WTC11 (cell line): ENCODE measurements at regions of chr4 and their contacts with region 1.

Region 1: GRCh38 chr4:81069706-81070331 is 39.3 kb downstream of the BMP3 start:
- DNase-seq: peak; percentile 74
- ATAC-seq: peak; percentile 99
- H3K4me3 Mint-ChIP-seq: no peak overlapping the region
- H3K27ac Mint-ChIP-seq: no peak overlapping the region
- H3K4me1 Mint-ChIP-seq: no peaks in the 10 kb centered on the region; the same call in 1 of the 2 replicates
- H3K27me3 Mint-ChIP-seq: no peaks in the 10 kb centered on the region
- CTCF ChIP-seq: peak; percentile 83

Region 2: GRCh38 chr4:81116566-81116965 is 46.7 kb after region 1 on chr4:
- CTCF ChIA-PET with region 1: no interaction called
- POLR2A ChIA-PET with region 1: no interaction called
- DNase-seq: no peak
- ATAC-seq: no peak
- H3K4me3 Mint-ChIP-seq: no peak overlapping the region
- H3K27ac Mint-ChIP-seq: no peak overlapping the region
- H3K4me1 Mint-ChIP-seq: peaks cover 7% of the 10 kb centered on the region
- H3K27me3 Mint-ChIP-seq: no peaks in the 10 kb centered on the region
- CTCF ChIP-seq: no peak

Region 3: DNA sequence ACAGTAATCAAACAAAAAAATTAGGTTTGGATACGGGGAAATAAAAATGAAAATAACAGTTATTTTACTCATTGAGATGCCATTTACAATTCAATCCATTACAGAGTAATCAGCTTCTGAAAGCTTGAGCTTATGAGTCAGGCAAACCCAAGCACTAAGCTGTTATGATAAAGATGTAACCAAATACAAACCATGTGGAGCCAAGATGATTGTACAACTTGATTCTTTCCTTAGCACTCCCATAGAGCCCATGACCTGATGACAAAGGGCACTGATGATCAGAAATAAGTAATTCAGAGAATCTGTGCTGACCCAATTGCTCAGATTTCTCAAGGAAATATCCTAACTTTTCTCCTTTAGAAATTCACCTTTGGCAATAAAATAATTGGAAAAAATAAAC is 185.7 kb after region 1 on chr4:
- CTCF ChIA-PET with region 1: interaction called, 31 read pairs
- POLR2A ChIA-PET with region 1: no interaction called
- DNase-seq: no peak
- ATAC-seq: no peak
- H3K4me3 Mint-ChIP-seq: no peak overlapping the region
- H3K27ac Mint-ChIP-seq: no peak overlapping the region
- H3K4me1 Mint-ChIP-seq: peaks cover under 1% of the 10 kb centered on the region; the same call in 1 of the 2 replicates
- H3K27me3 Mint-ChIP-seq: no peaks in the 10 kb centered on the region; the same call in 1 of the 2 replicates
- CTCF ChIP-seq: no peak

Region 4: DNA sequence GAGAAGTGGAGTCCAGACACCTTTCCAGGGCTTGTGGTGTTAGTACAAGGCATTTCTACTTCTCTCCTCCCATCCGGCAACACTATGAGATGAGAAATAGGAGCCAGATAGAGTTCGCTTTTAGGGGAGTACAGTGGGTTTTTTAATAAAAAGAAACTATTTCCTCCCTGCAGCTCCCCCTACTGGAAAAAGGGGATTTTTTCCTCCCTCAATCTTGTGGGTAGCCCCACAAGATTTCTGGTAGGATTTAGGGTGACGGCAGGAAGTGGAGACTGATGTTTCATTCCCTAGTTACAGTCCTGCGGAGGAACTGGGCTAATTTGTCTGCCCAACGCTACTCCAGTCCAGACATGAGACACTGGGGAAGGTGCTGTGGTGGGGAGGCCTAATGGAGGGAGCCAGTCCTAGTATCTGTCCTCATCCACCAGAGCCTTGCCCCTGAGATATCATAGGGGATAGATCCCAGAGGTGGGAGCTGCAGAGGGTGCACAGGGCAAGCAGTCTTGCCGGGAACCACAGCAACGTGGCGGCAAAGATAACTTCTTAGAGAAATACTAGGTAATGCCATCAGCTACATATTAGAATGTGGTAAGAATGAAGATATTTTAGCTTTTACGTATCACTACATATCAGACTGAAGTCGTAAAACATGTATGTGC is 190.8 kb after region 1 on chr4:
- CTCF ChIA-PET with region 1: interaction called, 31 read pairs
- POLR2A ChIA-PET with region 1: no interaction called
- DNase-seq: peak; percentile 14
- ATAC-seq: peak; percentile 93
- H3K4me3 Mint-ChIP-seq: no peak overlapping the region
- H3K27ac Mint-ChIP-seq: no peak overlapping the region
- H3K4me1 Mint-ChIP-seq: peaks cover 2% of the 10 kb centered on the region
- H3K27me3 Mint-ChIP-seq: no peaks in the 10 kb centered on the region; the same call in 1 of the 2 replicates
- CTCF ChIP-seq: peak; percentile 40; the same call in 1 of the 2 replicates

Region 5: DNA sequence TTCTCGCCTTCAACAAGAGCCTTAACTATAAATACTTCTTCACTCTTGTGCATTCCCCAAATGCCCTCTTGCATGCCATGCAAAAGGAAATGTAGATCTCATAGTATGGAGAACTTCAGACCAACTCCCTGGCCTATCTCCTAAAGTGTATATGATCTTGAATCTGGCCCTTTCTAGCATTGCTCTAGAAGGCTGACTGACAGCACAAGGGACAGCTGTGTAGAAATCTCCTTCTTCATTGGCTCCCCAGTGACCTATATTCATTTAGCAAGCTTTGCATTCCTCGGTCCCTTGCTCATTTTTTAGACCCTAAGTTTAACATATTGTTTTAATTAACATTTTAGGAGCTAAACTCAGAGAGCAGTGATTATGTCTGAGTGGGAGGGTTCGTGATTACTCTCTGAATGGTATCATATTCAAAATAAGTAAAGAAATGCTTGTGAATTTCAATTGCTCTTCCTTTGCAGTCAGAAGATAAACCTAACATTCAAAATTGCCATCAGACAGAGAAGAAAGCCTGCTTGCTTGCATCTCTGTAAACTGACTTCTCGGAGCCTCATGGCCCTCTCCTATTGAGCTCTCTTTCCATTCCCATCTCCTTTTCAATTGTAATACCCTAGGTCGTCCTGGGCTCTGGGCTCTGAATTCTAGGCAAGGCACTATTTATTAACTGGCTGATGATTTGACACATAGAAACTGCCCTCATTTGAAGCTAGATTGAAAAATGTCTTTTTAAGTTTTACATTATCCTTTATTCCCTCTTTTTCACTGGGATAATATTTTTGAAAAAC is 265.5 kb after region 1 on chr4:
- CTCF ChIA-PET with region 1: interaction called, 10 read pairs
- POLR2A ChIA-PET with region 1: no interaction called
- DNase-seq: no peak
- ATAC-seq: peak; percentile 56
- H3K4me3 Mint-ChIP-seq: no peak overlapping the region
- H3K27ac Mint-ChIP-seq: no peak overlapping the region
- H3K4me1 Mint-ChIP-seq: peaks cover 6% of the 10 kb centered on the region
- H3K27me3 Mint-ChIP-seq: no peaks in the 10 kb centered on the region
- CTCF ChIP-seq: no peak

Region 6: DNA sequence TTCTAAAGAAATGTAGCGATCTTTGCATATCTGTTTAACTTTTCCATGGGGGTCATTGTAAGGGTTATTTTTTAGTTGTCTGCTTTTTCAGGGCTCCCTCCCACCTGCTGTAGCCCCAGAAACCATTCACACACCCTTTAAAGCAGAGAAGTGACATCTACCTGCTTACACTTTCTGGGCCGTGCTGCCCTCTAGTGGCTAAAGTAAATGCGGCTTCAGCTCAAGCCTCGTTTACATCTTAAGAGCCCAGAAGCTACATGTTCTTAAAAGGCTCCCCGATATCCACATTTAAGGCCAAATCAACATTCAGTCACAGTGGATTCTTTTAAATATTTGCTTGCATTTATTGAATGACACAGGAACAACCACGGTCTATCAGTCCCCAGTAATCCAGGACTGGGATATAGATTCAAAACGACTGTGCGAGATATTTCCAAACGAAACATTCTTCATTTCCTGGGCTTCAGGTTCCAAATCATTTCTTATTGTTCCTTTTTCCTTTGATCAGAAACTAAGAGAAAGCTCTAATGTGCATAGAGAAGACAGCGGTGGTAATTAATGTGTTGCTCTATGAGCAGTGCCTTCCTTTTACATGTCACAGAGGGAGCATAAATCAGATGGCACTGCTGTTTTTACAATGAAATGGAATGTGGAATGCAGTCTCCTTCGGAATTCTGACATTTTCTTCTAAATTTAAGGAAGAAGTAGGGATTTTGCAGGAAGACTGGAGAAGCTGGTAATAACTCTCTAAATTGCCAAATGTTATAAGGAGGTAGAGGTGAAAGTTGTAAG is 282.0 kb after region 1 on chr4:
- CTCF ChIA-PET with region 1: interaction called, 52 read pairs
- POLR2A ChIA-PET with region 1: interaction called, 3 read pairs
- DNase-seq: peak; percentile 85
- ATAC-seq: peak; percentile 94
- H3K4me3 Mint-ChIP-seq: no peak overlapping the region
- H3K27ac Mint-ChIP-seq: no peak overlapping the region
- H3K4me1 Mint-ChIP-seq: peaks cover 6% of the 10 kb centered on the region
- H3K27me3 Mint-ChIP-seq: no peaks in the 10 kb centered on the region
- CTCF ChIP-seq: peak; percentile 82